GM12878 (cell line): ENCODE measurements at regions of chr1 and their contacts with region 1.

Region 1: DNA sequence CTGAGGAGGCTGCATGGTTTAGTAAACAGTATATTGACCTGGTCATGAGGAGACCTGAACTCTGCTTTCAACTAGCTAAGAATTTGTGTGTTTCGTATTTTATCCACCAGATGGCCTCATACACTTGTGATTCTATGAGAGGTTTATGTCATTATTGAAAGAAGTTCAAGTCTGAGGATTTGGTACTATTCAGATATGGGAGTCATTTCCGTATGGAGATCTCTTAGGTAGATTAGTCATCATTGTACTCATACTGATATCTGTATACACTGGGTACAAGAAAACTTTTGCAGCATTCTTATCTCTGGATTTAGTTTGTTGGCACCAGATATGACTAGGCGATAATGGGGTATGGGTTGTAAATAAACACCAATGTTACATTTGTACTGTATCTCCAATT is 26.6 kb downstream of the ATF6 start:
- DNase-seq: peak; percentile 23
- ATAC-seq: peak; percentile 90
- H3K4me3 ChIP-seq: no peak overlapping the region
- H3K27ac ChIP-seq: no peak overlapping the region
- H3K4me1 ChIP-seq: no peaks in the 10 kb centered on the region
- H3K27me3 ChIP-seq: no peaks in the 10 kb centered on the region
- CTCF ChIP-seq: peak; percentile 42 to 61 (median 49); a peak in 5 of 6 replicates
- EP300 ChIP-seq: no peak
- POLR2A ChIP-seq: no peak
- RAD21 ChIP-seq: peak; percentile 73

Region 2: GRCh38 chr1:161427733-161428516 is 364.8 kb before region 1 on chr1:
- CTCF ChIA-PET with region 1: no interaction called
- POLR2A ChIA-PET with region 1: no interaction called
- RAD21 ChIA-PET with region 1: no interaction called
- SMC1A ChIA-PET with region 1: no interaction called
- in situ Hi-C with region 1: no loop called
- intact Hi-C with region 1: no loop called
- DNase-seq: peak; percentile 72
- ATAC-seq: peak; percentile 92
- H3K4me3 ChIP-seq: peak overlapping the region; percentile 62
- H3K27ac ChIP-seq: no peak overlapping the region
- H3K4me1 ChIP-seq: no peaks in the 10 kb centered on the region
- H3K27me3 ChIP-seq: no peaks in the 10 kb centered on the region
- CTCF ChIP-seq: no peak
- EP300 ChIP-seq: no peak; a peak in 1 of 4 replicates
- POLR2A ChIP-seq: no peak
- RAD21 ChIP-seq: no peak

Region 3: GRCh38 chr1:161781995-161782394 is 10.7 kb before region 1 on chr1:
- CTCF ChIA-PET with region 1: interaction called, 18 read pairs
- POLR2A ChIA-PET with region 1: no interaction called
- RAD21 ChIA-PET with region 1: no interaction called
- SMC1A ChIA-PET with region 1: interaction called, 4 read pairs
- in situ Hi-C with region 1: no loop called
- intact Hi-C with region 1: no loop called
- DNase-seq: no peak
- ATAC-seq: peak; percentile 29
- H3K4me3 ChIP-seq: peak overlapping the region; percentile 12
- H3K27ac ChIP-seq: peak overlapping the region; percentile 48; the same call in 1 of the 2 replicates
- H3K4me1 ChIP-seq: peaks cover 43% of the 10 kb centered on the region
- H3K27me3 ChIP-seq: no peaks in the 10 kb centered on the region
- CTCF ChIP-seq: no peak
- EP300 ChIP-seq: no peak
- POLR2A ChIP-seq: no peak
- RAD21 ChIP-seq: no peak

Region 4: DNA sequence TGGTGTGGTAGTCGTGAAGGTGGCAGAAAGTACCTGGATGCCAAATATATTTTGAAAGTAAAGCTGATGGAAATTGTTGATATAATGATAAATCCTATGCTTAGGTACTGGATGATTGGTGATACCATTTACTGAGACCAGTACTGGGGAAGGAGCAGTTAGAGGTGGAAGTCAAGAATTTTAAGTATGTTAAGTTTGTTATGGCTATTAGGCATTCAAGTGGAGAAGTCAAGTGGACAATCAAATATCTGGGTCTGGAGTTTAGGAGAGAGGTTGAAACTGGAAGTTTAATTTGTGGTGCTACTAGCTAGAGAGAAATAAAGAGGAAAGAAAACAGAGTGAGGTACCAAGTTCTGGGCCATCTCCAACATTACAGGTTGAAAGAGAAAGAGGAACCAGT is 62.5 kb after region 1 on chr1:
- CTCF ChIA-PET with region 1: interaction called, 15 read pairs
- POLR2A ChIA-PET with region 1: no interaction called
- RAD21 ChIA-PET with region 1: interaction called, 4 read pairs
- SMC1A ChIA-PET with region 1: interaction called, 9 read pairs
- in situ Hi-C with region 1: no loop called
- intact Hi-C with region 1: no loop called
- DNase-seq: no peak
- ATAC-seq: no peak
- H3K4me3 ChIP-seq: no peak overlapping the region
- H3K27ac ChIP-seq: no peak overlapping the region
- H3K4me1 ChIP-seq: no peaks in the 10 kb centered on the region
- H3K27me3 ChIP-seq: no peaks in the 10 kb centered on the region
- CTCF ChIP-seq: no peak
- EP300 ChIP-seq: no peak
- POLR2A ChIP-seq: no peak
- RAD21 ChIP-seq: no peak

Region 5: GRCh38 chr1:161885003-161885402 is 92.3 kb after region 1 on chr1:
- CTCF ChIA-PET with region 1: interaction called, 11 read pairs
- POLR2A ChIA-PET with region 1: no interaction called
- RAD21 ChIA-PET with region 1: no interaction called
- SMC1A ChIA-PET with region 1: interaction called, 4 read pairs
- in situ Hi-C with region 1: no loop called
- intact Hi-C with region 1: no loop called
- DNase-seq: no peak
- ATAC-seq: no peak
- H3K4me3 ChIP-seq: no peak overlapping the region
- H3K27ac ChIP-seq: no peak overlapping the region
- H3K4me1 ChIP-seq: no peaks in the 10 kb centered on the region
- H3K27me3 ChIP-seq: no peaks in the 10 kb centered on the region
- CTCF ChIP-seq: no peak
- EP300 ChIP-seq: no peak
- POLR2A ChIP-seq: no peak
- RAD21 ChIP-seq: no peak

Region 6: GRCh38 chr1:162035241-162035640 is 242.5 kb after region 1 on chr1:
- CTCF ChIA-PET with region 1: interaction called, 214 read pairs
- POLR2A ChIA-PET with region 1: interaction called, 7 read pairs
- RAD21 ChIA-PET with region 1: interaction called, 152 read pairs
- SMC1A ChIA-PET with region 1: interaction called, 132 read pairs
- in situ Hi-C with region 1: loop called (anchors 5 kb)
- intact Hi-C with region 1: loop called (anchors 2 kb)
- DNase-seq: no peak
- ATAC-seq: no peak
- H3K4me3 ChIP-seq: no peak overlapping the region
- H3K27ac ChIP-seq: no peak overlapping the region
- H3K4me1 ChIP-seq: no peaks in the 10 kb centered on the region
- H3K27me3 ChIP-seq: peaks cover 1 to 5% of the 10 kb centered on the region in 2 experiments; a peak in 2 of 4 replicates
- CTCF ChIP-seq: no peak
- EP300 ChIP-seq: no peak
- POLR2A ChIP-seq: no peak
- RAD21 ChIP-seq: no peak

Region 7: DNA sequence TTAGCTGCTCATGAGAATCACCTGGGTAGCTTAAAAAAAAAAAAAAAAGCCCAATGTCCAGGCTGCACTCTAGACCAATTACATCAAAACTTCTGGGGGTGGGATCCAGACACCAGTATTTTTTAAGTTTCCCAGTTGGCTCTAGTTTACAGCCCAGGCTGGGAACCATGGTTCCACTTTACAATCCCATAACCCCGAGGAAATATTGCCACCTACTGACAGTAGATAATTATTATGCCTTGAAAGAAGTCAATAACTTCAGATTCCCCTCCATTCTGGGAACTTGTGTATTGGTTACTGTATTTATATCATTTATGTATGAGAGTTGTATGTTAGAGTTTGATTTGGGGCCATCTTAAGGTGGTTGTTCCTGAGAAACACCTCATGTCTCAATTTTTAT is 483.8 kb after region 1 on chr1:
- CTCF ChIA-PET with region 1: interaction called, 12 read pairs
- POLR2A ChIA-PET with region 1: no interaction called
- RAD21 ChIA-PET with region 1: interaction called, 7 read pairs
- SMC1A ChIA-PET with region 1: interaction called, 5 read pairs
- in situ Hi-C with region 1: no loop called
- intact Hi-C with region 1: no loop called
- DNase-seq: no peak
- ATAC-seq: peak; percentile 61; the same call in 2 of the 3 replicates
- H3K4me3 ChIP-seq: no peak overlapping the region
- H3K27ac ChIP-seq: no peak overlapping the region
- H3K4me1 ChIP-seq: no peaks in the 10 kb centered on the region
- H3K27me3 ChIP-seq: peaks cover 0 to 2% of the 10 kb centered on the region in 2 experiments; a peak in 1 of 4 replicates
- CTCF ChIP-seq: peak in 2 of 3 experiments; percentile 32 to 53; a peak in 4 of 6 replicates
- EP300 ChIP-seq: no peak
- POLR2A ChIP-seq: no peak
- RAD21 ChIP-seq: peak; percentile 62